ENCODE measurements at regions of chr19 and their contacts with region 1.

Region 1: GRCh38 chr19:34096020-34096915 is 76.0 kb upstream of the LSM14A start:
- DNase-seq: peak; percentile 46
- CTCF ChIP-seq: peak; percentile 35

Region 2: DNA sequence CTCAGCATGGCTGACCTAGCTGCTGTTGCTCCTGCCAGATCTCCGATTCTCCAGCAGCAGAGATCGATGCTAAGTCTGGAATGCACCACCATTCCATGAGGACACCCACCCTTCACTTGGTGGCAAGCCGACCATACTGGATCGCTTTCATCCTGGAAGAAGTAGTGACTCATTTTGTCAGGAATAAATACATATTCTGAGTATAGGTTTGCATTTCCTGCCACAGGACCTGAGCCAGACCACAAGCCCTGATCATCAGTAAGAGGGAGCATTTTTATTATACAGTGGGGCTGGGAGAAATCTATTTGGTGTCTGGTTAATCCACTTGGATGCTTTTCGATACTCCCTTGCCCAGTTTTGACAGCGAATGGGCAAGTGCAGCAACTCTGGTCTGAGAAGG is 310.5 kb before region 1 on chr19:
- in situ Hi-C with region 1: loop called (anchors 10 kb)
- DNase-seq: no peak
- CTCF ChIP-seq: no peak